ENCODE measurements at regions of chr7 and their contacts with region 1.

Region 1: DNA sequence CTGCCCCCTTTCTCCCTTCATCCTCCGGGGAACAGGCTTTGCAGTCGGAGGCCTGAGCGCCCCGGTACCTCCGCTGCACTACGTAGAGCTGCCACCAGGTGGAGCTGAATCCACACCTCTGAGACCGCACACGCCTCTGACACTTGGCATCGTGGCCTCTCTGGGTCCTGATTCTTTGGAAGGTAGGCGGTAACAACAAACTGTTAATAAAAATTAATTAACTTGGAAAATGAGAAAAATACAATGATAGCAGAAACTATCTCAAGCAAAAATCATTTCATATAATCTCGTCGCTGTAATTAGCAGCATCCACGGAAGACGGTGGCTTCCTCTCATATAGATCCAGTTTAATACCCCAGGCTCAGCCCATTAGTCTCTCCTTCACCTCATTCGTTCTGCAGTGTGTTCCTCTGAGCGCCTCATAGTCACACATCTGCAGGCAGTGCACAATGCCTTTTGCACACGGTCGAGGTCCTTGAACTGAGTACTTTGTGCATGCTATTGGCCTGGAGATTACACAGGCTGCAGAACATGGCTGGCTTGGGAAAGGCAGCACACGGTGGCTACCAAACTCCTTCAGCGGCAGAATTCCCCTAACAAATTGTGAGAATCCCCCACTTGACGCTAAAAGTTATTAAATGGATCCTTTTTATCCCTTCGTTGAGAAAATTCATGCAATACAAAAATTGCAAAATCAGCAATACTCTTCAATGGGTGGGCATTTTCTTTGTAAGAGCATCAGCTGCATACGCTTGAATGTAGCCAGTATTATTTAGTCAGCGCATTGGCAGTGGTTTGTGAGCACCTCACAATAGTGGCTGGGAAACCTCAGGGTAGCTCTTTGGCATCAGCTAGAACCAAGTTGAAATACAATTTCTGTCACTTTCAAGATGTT is 18.7 kb downstream of the OR9A2 start:
- DNase-seq: peak; percentile 62
- H3K4me3 Mint-ChIP-seq: no peak overlapping the region
- H3K27ac Mint-ChIP-seq: no peak overlapping the region
- H3K4me1 Mint-ChIP-seq: peaks cover 2% of the 10 kb centered on the region
- H3K27me3 Mint-ChIP-seq: peaks cover 33% of the 10 kb centered on the region

Region 2: GRCh38 chr7:142301923-142302550 is 706.2 kb before region 1 on chr7:
- intact Hi-C with region 1: loop called (anchors 10 kb)
- DNase-seq: no peak
- H3K4me3 Mint-ChIP-seq: no peak overlapping the region
- H3K27ac Mint-ChIP-seq: no peak overlapping the region
- H3K4me1 Mint-ChIP-seq: peaks cover 1% of the 10 kb centered on the region
- H3K27me3 Mint-ChIP-seq: peaks cover 24% of the 10 kb centered on the region

Region 3: GRCh38 chr7:142535123-142535779 is 473.0 kb before region 1 on chr7:
- intact Hi-C with region 1: loop called (anchors 5 kb)
- DNase-seq: peak; percentile 70
- H3K4me3 Mint-ChIP-seq: peak overlapping the region; percentile 28
- H3K27ac Mint-ChIP-seq: peak overlapping the region; percentile 82
- H3K4me1 Mint-ChIP-seq: peaks cover 26% of the 10 kb centered on the region
- H3K27me3 Mint-ChIP-seq: peaks cover 3% of the 10 kb centered on the region

Region 4: GRCh38 chr7:142853739-142854371 is 154.4 kb before region 1 on chr7:
- intact Hi-C with region 1: no loop called
- DNase-seq: peak; percentile 61
- H3K4me3 Mint-ChIP-seq: peak overlapping the region; percentile 89
- H3K27ac Mint-ChIP-seq: peak overlapping the region; percentile 71
- H3K4me1 Mint-ChIP-seq: peaks cover 8% of the 10 kb centered on the region
- H3K27me3 Mint-ChIP-seq: peaks cover 31% of the 10 kb centered on the region

Region 5: GRCh38 chr7:143018931-143019330 is 10.7 kb after region 1 on chr7:
- intact Hi-C with region 1: no loop called
- DNase-seq: no peak
- H3K4me3 Mint-ChIP-seq: no peak overlapping the region
- H3K27ac Mint-ChIP-seq: no peak overlapping the region
- H3K4me1 Mint-ChIP-seq: no peaks in the 10 kb centered on the region
- H3K27me3 Mint-ChIP-seq: peaks cover 22% of the 10 kb centered on the region

Region 6: GRCh38 chr7:143214789-143215679 is 206.8 kb after region 1 on chr7:
- intact Hi-C with region 1: loop called (anchors 1 kb)
- DNase-seq: peak; percentile 48
- H3K4me3 Mint-ChIP-seq: no peak overlapping the region
- H3K27ac Mint-ChIP-seq: no peak overlapping the region
- H3K4me1 Mint-ChIP-seq: no peaks in the 10 kb centered on the region
- H3K27me3 Mint-ChIP-seq: peaks cover 8% of the 10 kb centered on the region

Region 7: DNA sequence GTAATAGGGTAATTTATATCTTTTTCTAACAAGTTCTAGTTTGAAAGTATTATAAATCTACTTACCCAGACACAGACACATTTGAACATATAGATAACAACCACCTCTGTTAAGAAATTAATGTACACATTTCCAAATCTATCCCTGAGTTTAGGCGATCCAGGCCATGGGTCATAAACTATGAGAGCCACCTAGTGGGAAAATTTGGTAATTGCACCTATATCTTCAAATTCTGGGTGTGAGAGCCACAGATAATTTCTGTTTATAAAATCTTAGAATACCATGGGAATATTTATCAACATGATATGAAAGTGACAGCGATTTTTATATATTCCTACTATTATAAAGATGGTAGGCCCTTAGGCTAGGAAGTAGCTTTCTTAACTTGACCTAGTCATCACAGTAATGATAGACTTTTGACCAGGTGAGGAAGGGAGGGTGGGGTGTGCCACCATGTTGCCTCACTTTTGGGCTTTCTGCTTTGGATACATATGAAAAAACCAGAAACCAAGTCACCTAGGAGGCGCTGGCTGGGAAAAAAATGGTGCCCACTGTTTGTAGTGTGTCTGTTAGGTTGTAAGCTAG is 408.4 kb after region 1 on chr7:
- intact Hi-C with region 1: loop called (anchors 1 kb)
- DNase-seq: no peak
- H3K4me3 Mint-ChIP-seq: no peak overlapping the region
- H3K27ac Mint-ChIP-seq: no peak overlapping the region
- H3K4me1 Mint-ChIP-seq: no peaks in the 10 kb centered on the region
- H3K27me3 Mint-ChIP-seq: peaks cover 26% of the 10 kb centered on the region

Measured in activated T-helper 2 cell treated with anti-CD3 and anti-CD28 coated beads, Interferon-gamma antibody, Interleukin-2, Interleukin-4, amounts not matched to agents 10 μg/mL and 5 μg/mL and 100 μg/mL, durations not matched to agents 14 hours and 24 hours and 36 hours (primary cell).